Activated CD4-positive, alpha-beta memory T cell treated with anti-CD3 and anti-CD28 coated beads for 36 hours (primary cell): ENCODE measurements at regions of chr16 and their contacts with region 1.

Region 1: DNA sequence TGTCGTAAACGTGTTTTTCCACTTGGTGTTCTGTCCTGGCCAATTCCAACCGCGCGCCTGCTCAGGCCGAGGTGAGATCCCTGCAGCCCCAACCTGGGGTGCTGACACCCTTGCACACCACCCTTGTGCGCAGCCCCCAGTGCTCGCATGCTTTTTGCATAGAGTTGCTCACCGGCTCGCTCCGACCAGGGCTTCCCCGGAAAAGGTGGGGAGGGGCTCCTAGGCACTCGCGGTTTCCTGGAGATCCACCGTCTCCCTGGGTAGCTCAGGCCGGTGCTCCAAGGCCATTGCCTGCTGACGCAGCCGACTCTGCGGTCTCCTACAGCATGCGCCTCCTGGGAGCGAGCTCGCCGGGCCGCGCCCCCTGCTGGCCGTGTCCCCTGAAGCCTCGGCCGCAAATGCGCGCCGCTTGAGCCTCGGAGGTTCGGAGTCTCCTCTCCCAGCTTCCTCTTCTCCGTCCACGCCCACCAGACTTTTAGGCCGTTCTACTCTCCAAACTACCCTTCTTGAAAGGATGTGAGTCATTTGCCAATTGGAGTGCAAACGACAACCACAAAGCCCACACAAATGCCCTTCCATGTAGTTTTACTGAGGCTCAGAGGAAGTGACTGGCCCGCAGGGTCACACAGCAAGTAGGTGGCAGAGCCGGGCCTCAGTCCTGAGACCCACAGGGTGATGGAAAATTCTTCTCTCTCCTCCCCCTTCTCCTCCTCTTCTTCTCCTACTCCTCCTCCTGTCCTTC is 7.2 kb upstream of the PDP2 start:
- DNase-seq: peak; percentile 96
- H3K4me3 Mint-ChIP-seq: peak overlapping the region; percentile 74
- H3K27ac Mint-ChIP-seq: peak overlapping the region; percentile 69
- H3K4me1 Mint-ChIP-seq: peaks cover 46% of the 10 kb centered on the region
- H3K27me3 Mint-ChIP-seq: no peaks in the 10 kb centered on the region

Region 2: DNA sequence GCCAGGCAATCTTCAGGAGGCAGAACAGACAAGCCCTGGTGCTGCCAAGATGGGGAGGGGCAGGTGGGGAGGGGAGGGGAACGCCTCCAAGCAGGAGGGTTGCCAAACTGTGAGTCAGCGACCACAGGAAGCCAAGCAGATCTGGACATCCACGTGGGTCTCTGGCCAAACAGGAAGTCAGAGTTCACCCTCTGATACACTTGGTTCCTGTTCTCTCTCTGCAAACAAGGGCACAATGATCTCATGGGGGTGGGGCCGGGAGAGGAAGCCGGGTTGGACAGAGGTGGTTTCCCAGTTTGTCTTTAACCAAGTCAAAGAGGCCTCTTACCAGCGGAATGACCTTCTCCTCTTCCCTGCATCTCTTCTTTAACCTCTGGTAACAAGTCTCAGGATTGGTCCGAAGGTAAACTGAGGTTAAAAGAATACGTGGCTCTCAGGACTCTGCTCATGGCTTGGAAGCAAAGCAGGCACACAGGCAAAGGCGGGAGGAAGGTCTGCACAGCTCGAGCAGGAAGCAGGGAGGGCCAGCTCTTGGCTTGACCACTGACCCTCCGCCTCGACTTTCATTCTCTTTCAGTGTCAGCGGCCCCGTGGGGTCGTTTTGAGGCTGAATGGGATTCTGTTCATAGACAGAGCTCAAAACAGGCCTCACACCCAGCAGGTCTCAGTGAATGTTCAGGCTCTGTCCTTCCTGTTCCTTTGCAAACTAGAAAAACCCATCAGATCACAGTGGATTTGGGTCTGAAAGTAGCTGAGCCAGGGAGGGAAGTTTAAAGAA is 356.1 kb before region 1 on chr16:
- CTCF ChIA-PET with region 1: interaction called, 3 read pairs
- POLR2A ChIA-PET with region 1: no interaction called
- intact Hi-C with region 1: loop called (anchors 2 kb)
- DNase-seq: peak; percentile 95
- H3K4me3 Mint-ChIP-seq: peak overlapping the region; percentile 87
- H3K27ac Mint-ChIP-seq: peak overlapping the region; percentile 99
- H3K4me1 Mint-ChIP-seq: peaks cover 71% of the 10 kb centered on the region
- H3K27me3 Mint-ChIP-seq: no peaks in the 10 kb centered on the region

Region 3: GRCh38 chr16:66650707-66651473 is 222.2 kb before region 1 on chr16:
- CTCF ChIA-PET with region 1: interaction called, 5 read pairs
- POLR2A ChIA-PET with region 1: no interaction called
- intact Hi-C with region 1: loop called (anchors 5 kb)
- DNase-seq: peak; percentile 86
- H3K4me3 Mint-ChIP-seq: peak overlapping the region; percentile 58
- H3K27ac Mint-ChIP-seq: no peak overlapping the region
- H3K4me1 Mint-ChIP-seq: peaks cover 10% of the 10 kb centered on the region
- H3K27me3 Mint-ChIP-seq: peaks cover 5% of the 10 kb centered on the region

Region 4: GRCh38 chr16:66690106-66690847 is 182.8 kb before region 1 on chr16:
- CTCF ChIA-PET with region 1: no interaction called
- POLR2A ChIA-PET with region 1: no interaction called
- intact Hi-C with region 1: no loop called
- DNase-seq: no peak
- H3K4me3 Mint-ChIP-seq: no peak overlapping the region
- H3K27ac Mint-ChIP-seq: no peak overlapping the region
- H3K4me1 Mint-ChIP-seq: peaks cover 6% of the 10 kb centered on the region
- H3K27me3 Mint-ChIP-seq: no peaks in the 10 kb centered on the region

Region 5: DNA sequence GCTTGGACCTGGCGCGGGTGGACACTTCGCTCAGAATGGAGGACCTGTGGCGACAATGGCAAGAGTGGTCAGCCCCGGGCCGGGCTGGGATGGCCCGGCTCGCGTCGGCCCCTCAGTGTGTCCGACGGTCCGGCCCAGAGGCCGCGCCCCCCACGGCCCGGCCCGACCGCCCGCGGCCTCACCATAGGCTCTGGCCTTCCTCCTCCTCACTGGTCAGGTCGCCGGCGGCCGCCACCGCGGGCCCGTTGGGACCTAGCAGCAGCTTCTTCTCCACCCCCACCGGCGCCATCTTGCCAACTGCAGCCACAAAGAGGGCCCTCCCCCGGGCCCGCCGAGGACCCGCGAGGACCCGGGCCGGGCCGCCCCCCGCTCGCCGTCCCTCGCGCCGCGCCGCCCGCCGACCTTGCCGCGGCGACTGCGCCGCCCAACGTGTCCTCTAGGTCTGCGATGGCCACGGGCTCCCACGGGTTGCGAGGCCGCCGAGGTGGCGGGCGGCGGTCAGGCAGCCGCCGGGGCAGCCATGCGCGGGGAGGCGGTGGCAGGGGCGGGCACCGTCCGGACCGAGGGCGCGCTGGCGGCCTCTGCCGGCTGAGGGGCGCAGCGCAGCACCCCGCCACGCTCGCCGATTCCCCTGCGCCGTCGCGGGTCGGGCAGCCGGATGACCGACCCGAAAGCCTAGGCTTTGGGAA is 121.7 kb before region 1 on chr16 and contains the start of gene DYNC1LI2:
- CTCF ChIA-PET with region 1: interaction called, 14 read pairs
- POLR2A ChIA-PET with region 1: no interaction called
- intact Hi-C with region 1: loop called (anchors 2 kb)
- DNase-seq: peak; percentile 84
- H3K4me3 Mint-ChIP-seq: peak within 1 kb of the TSS; percentile 83
- H3K27ac Mint-ChIP-seq: peak within 1 kb of the TSS; percentile 74
- H3K4me1 Mint-ChIP-seq: peaks cover 37% of the 10 kb centered on the region
- H3K27me3 Mint-ChIP-seq: peaks cover 4% of the 10 kb centered on the region
- total RNA-seq, gene DYNC1LI2: 37.9 to 39.1 TPM

Region 6: DNA sequence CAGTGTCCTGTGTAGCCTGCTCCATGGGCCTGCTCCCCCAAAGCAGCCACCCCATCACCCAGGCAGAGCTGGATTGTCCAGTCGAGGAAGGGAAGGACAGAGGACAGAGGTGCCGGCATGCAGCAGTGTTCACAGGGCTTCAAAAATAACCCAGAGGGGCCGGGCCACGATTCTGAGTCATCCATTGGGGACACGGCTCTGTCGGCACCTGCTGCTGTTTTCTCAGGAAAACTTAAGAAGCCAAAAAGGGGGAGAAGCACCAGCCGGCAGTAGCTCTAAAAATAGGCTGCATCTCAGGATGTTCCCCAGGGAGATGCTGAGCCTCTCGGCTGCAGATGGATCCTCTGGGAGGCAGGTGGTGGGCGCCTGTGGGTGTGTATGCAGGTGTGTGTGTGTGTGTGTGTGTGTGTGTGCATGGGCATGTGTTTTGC is 27.3 kb before region 1 on chr16:
- CTCF ChIA-PET with region 1: interaction called, 12 read pairs
- POLR2A ChIA-PET with region 1: interaction called, 3 read pairs
- intact Hi-C with region 1: no loop called
- DNase-seq: no peak
- H3K4me3 Mint-ChIP-seq: no peak overlapping the region
- H3K27ac Mint-ChIP-seq: no peak overlapping the region
- H3K4me1 Mint-ChIP-seq: peaks cover 13% of the 10 kb centered on the region
- H3K27me3 Mint-ChIP-seq: peaks cover 32% of the 10 kb centered on the region

Region 7: DNA sequence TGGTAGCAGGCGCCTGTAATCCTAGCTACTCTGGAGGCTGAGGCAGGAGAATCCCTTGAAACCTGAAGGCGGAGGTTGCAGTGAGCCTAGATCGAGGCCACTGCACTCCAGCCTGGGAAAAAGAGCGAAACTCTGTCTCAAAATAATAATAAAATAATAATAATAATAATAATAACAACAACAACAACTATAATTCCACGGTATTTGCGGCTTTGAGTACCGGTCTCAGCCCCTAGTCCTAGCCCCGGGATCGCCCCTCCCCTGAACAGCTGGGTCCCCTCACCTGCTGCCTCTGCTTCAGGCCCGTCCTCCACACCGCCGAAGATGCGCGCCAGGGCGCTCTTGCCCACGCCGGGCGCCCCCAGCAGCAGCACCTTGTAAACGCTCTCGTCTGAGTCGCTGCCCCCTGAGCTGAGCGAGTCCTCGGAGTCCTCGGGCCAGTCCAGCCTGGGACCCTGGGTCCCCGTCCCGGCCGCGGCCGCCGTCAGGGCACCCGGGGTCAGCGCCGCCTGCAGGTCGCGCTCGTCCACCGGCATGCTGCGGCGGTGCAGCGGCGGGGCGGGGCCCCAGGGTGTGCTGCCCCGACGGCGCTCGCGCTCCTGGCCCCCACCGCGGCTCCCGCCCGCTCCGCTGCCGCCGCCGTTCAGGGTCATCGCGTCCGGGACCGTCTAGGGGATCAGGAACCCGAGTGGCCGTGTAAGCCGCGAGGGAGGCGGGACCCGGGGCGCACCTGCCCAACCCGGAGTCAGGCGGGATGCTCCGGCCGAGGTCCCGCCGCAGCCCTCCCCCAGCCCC is 51.6 kb after region 1 on chr16:
- CTCF ChIA-PET with region 1: interaction called, 12 read pairs
- POLR2A ChIA-PET with region 1: no interaction called
- intact Hi-C with region 1: no loop called
- DNase-seq: peak; percentile 65
- H3K4me3 Mint-ChIP-seq: peak overlapping the region; percentile 20
- H3K27ac Mint-ChIP-seq: no peak overlapping the region
- H3K4me1 Mint-ChIP-seq: peaks cover 11% of the 10 kb centered on the region
- H3K27me3 Mint-ChIP-seq: peaks cover 30% of the 10 kb centered on the region

Region 8: GRCh38 chr16:67084345-67085028 is 211.4 kb after region 1 on chr16:
- CTCF ChIA-PET with region 1: no interaction called
- POLR2A ChIA-PET with region 1: no interaction called
- intact Hi-C with region 1: no loop called
- DNase-seq: no peak
- H3K4me3 Mint-ChIP-seq: no peak overlapping the region
- H3K27ac Mint-ChIP-seq: no peak overlapping the region
- H3K4me1 Mint-ChIP-seq: peaks cover 5% of the 10 kb centered on the region
- H3K27me3 Mint-ChIP-seq: no peaks in the 10 kb centered on the region